Left cardiac atrium (tissue), 4 donors: ENCODE measurements at regions of chrX and their contacts with region 1.

Region 1: GRCh38 chrX:119516157-119516702 is 48.0 kb downstream of the SLC25A5 start:
- DNase-seq: no peak
- ATAC-seq: peak; percentile 53 to 83

Region 2: DNA sequence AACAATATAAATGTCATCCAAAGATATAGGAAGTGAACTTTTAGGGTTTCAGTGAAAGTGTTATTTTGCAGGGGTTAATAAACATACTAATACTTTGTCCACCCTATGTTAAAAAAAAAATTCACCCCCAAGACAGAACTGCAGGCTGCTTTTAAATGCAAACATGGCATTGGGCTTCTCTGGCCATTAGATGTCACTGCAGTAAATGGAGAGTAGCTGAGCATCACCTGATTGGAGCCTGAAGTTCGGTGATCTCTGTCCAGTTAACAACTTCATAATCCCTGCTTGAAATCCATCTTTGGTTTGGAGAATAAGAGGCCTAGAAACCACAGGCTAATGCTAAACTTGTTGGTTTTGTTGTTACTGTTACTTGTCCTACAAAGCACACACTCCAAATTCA is 98.4 kb before region 1 on chrX:
- intact Hi-C with region 1: loop called in 1 of 2 experiments (anchors 5 kb)
- DNase-seq: no peak
- ATAC-seq: no peak

Region 3: DNA sequence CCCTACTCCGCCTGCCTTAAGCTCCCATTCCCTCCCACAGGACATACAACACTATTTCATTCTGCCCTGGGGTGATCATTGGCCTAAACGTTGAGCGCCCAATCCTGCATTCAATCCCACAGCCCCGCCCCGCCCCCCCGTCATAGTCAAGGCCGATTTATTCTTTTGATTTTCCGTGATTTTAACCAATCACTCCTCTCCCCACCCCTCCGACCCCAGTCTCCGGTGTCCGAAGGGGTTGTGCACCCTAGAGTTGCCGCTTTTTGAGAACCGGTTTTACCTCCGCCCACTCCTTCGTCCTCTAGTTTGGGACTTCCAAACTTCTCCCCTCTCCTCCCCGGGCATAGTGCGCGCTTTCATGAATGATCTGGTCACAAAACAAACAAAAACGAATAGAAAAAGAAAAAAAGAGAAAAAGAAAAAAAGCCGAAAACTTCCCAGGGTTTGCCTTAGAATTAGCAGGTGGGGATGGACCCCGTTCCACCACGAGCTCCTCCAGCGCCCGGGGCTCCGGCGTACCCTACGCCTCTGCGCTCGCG is 57.7 kb after region 1 on chrX:
- intact Hi-C with region 1: loop called in 1 of 2 experiments (anchors 2 kb)
- DNase-seq: peak; percentile 30
- ATAC-seq: peak; percentile 27 to 33

Region 4: GRCh38 chrX:119606280-119607015 is 90.2 kb after region 1 on chrX and contains the start of gene NKRF:
- intact Hi-C with region 1: loop called in 1 of 2 experiments (anchors 10 kb)
- DNase-seq: peak; percentile 94
- ATAC-seq: peak; percentile 94 to 96
- total RNA-seq, gene NKRF: 4.0 to 6.1 TPM

Region 5: GRCh38 chrX:119729408-119730201 is 213.4 kb after region 1 on chrX:
- intact Hi-C with region 1: loop called (anchors 10 kb)
- DNase-seq: peak; percentile 39
- ATAC-seq: peak; percentile 47 to 49